ENCODE measurements at regions of chr6 and their contacts with region 1.

Region 1: DNA sequence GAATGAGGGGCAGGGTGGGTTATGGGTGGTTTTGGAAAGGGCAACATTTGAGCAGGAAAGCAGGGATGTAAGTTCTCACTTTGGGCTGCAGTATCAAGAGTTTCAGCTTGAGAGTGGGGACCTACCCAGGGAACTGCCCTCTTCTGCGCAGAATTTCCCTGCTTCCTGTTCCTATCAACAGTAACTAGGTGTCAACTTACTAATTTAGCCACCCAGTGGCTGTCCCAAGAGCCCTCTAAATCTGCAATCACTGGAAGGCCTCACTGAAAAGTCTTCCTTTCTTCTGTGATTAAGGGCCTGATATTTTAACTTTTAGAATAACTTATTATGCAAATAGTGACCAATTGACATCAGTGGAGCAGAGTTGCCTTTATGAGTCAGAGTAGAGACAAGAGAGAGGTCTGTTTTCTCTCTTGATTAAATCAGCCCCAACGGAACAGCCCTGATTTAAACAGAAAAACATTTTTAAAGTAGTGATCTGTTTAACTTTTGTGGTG is 118.2 kb upstream of the RIPOR2 start:
- DNase-seq: peak in 2 of 9 experiments; percentile 62 to 76
- ATAC-seq: no peak
- H3K4me3 ChIP-seq: no peak overlapping the region
- H3K4me3 Mint-ChIP-seq: no peak overlapping the region
- H3K27ac ChIP-seq: no peak overlapping the region
- H3K27ac Mint-ChIP-seq: peak overlapping the region; percentile 11
- H3K4me1 ChIP-seq: peaks cover 41% of the 10 kb centered on the region
- H3K4me1 Mint-ChIP-seq: peaks cover 72% of the 10 kb centered on the region
- H3K27me3 ChIP-seq: no peaks in the 10 kb centered on the region
- H3K27me3 Mint-ChIP-seq: no peaks in the 10 kb centered on the region
- CTCF ChIP-seq: no peak

Region 2: GRCh38 chr6:25042036-25042521 is 11.8 kb before region 1 on chr6:
- CTCF ChIA-PET with region 1: interaction called, 5 read pairs
- POLR2A ChIA-PET with region 1: interaction called, 12 read pairs
- intact Hi-C with region 1: loop called in 1 of 2 experiments (anchors 1 kb)
- DNase-seq: peak in 8 of 9 experiments; percentile 20 to 80 (median 59)
- ATAC-seq: peak; percentile 63
- H3K4me3 ChIP-seq: peak overlapping the region; percentile 52 to 82
- H3K4me3 Mint-ChIP-seq: peak overlapping the region; percentile 94
- H3K27ac ChIP-seq: peak overlapping the region; percentile 58 to 90
- H3K27ac Mint-ChIP-seq: peak overlapping the region; percentile 92
- H3K4me1 ChIP-seq: peaks cover 48% of the 10 kb centered on the region
- H3K4me1 Mint-ChIP-seq: peaks cover 60% of the 10 kb centered on the region
- H3K27me3 ChIP-seq: no peaks in the 10 kb centered on the region
- H3K27me3 Mint-ChIP-seq: no peaks in the 10 kb centered on the region
- CTCF ChIP-seq: no peak

Measured in CD8-positive, alpha-beta T cell (primary cell).